ENCODE measurements at regions of chr15 and their contacts with region 1.

Region 1: DNA sequence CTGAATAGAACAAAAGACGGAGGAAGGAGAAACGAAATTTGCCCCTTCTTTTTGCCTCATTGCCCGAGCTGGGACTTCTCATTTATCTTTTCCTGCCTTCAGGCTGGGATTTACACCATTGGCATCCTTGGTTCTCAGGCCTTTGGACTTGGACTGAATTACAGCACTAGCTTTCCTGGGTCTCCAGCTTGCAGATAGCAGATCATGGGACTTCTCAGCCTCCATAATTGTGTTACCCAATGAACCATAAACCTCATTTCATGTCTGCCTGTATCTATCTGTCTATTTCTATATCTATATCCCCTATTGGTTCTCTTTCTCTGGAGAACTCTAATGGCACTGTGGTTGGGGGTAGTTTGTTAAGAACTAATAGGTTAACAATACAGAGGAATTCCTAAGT is 31.5 kb upstream of the CTXND1 start:
- DNase-seq: no peak
- H3K4me3 ChIP-seq: no peak overlapping the region
- H3K27ac ChIP-seq: no peak overlapping the region
- H3K4me1 ChIP-seq: no peaks in the 10 kb centered on the region
- H3K27me3 ChIP-seq: no peaks in the 10 kb centered on the region
- CTCF ChIP-seq: no peak
- POLR2A ChIP-seq: no peak

Region 2: GRCh38 chr15:79519628-79520027 is 763.9 kb before region 1 on chr15:
- intact Hi-C with region 1: loop called (anchors 5 kb)
- DNase-seq: peak in 1 of 2 donors; percentile 58
- H3K4me3 ChIP-seq: no peak overlapping the region
- H3K27ac ChIP-seq: no peak overlapping the region
- H3K4me1 ChIP-seq: no peaks in the 10 kb centered on the region
- H3K27me3 ChIP-seq: no peaks in the 10 kb centered on the region
- CTCF ChIP-seq: no peak
- POLR2A ChIP-seq: no peak

Region 3: DNA sequence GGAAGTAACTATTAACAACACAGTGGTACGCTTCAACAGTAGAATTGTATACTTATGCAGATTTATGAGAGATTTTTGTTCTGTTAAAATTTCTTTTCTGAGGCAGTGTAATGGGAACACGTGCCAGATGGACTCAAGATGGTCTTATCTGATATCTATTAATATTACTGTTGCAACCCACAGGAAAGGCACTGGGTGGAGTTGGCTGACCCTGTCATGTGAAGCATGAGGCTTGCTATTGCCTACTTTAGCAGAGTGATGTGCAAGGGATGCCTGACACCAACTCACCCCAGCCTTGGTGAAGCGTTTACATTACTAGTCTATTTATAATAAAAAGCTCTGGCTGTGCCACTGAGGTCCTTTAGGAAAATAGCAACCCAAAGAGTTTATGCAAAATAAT is 100.9 kb after region 1 on chr15:
- intact Hi-C with region 1: no loop called
- DNase-seq: no peak
- H3K4me3 ChIP-seq: no peak overlapping the region
- H3K27ac ChIP-seq: no peak overlapping the region
- H3K4me1 ChIP-seq: no peaks in the 10 kb centered on the region
- H3K27me3 ChIP-seq: no peaks in the 10 kb centered on the region
- CTCF ChIP-seq: no peak
- POLR2A ChIP-seq: no peak

Measured in vagina (tissue), 2 donors.